ENCODE measurements at regions of chr1 and their contacts with region 1.

Region 1: GRCh38 chr1:40032240-40032891 is 8.2 kb upstream of the CAP1 start:
- DNase-seq: no peak
- H3K4me3 ChIP-seq: no peak overlapping the region
- H3K27ac ChIP-seq: no peak overlapping the region
- H3K27me3 ChIP-seq: no peaks in the 10 kb centered on the region
- CTCF ChIP-seq: peak; percentile 70

Region 2: DNA sequence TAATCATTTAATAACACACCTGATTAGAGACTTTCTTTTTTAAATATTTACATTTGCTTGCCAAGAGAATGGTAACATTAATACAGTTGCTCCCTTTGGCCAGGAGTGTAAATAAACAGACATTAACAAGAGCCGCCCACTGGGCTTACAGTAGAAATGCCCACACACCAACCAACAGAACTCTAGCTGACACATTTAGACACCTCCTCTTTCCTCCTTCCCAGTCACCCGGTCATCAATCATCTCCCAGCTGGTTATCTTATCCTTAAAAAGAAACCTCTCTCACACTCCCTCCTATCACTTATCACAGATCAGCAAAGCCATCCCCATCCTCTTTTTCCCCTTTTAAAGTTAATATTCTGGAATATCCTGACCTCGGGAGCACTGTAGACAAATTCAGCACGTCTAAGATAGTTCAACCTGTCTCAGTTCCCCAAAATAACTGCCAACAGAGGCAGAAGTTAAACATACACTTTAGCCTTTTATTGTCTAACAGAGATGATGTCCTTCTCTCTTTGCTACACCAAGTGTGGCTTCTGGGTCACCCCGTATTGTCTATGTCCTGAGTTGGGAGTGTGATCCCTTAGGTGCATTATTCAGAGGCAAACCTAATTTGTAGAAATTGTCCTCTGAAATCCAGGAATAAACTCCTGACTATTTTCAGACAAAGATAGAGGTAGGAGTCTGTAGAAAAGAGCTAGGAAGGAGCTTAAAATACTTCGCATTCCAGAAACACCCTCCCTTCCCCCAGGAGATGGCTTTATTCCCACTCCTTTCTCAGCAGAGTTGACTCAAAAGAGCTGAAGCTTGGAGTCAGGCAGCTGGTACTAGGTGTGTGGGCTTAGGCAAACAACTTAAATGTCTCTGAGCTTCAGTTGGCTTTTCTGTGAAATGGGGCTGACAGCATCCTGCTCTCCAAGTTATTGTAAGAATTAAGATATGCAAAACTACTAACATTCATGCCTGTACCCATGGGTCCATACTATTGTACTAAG is 139.5 kb before region 1 on chr1:
- CTCF ChIA-PET with region 1: interaction called, 15 read pairs
- POLR2A ChIA-PET with region 1: no interaction called
- DNase-seq: peak; percentile 48
- H3K4me3 ChIP-seq: no peak overlapping the region
- H3K27ac ChIP-seq: peak overlapping the region; percentile 13
- H3K27me3 ChIP-seq: no peaks in the 10 kb centered on the region
- CTCF ChIP-seq: no peak

Region 3: DNA sequence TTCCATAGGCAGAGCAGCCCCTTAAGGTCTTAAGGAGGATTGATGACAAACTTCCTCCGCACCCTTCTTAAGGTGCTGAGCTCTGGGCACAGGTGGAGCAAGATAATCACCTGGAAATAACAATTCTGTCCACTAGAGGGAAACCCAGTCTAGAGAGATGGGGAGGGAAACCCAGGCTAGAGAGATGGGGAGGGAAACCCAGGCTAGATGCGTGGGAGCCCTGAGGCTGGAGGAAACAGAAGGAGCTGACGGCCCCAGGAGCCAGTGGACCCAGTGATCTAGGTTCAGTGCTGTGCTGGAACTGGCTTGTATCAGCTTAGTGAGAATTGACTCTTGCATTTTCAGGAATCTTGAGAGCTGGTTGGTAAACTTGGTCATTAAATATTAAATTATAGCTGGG is 112.8 kb before region 1 on chr1:
- CTCF ChIA-PET with region 1: interaction called, 63 read pairs
- POLR2A ChIA-PET with region 1: no interaction called
- DNase-seq: peak; percentile 21
- H3K4me3 ChIP-seq: no peak overlapping the region
- H3K27ac ChIP-seq: no peak overlapping the region
- H3K27me3 ChIP-seq: peaks cover 12% of the 10 kb centered on the region
- CTCF ChIP-seq: peak; percentile 71

Region 4: DNA sequence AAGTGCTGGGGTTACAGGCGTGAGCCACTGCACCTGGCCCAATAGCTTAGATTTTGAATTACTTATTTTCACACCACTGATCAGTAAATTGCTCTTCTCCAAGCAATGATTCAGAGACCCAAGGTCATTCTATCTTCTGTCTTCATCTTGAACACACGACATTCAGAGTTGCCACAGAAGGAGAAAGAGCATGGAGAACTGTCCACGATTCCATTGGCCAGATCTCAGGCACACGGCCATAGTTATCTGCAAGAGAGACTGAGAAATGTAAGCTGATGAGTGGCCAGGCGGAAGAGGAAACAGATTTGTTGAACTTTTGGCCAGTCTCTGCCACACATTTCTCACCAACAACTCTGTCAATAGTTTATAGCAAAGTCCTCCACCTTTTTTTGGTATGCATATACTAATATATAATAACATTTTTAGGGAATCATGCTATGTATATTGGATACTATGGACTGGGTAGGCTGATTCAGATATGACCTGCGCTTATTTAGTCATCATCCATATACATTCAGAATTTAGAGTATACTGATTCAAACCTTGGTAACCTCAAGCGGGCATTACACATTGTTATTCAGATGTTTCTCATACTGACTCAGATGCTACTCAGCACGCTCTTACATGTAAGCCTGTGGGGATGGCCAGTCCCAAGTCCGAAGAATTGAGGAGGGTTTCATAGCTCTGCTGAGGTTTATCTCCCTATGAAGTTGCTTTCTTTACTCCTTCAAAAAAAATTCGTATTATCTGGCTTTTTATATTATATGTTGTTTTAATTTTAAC is 17.4 kb before region 1 on chr1:
- CTCF ChIA-PET with region 1: interaction called, 21 read pairs
- POLR2A ChIA-PET with region 1: interaction called, 4 read pairs
- DNase-seq: peak; percentile 76
- H3K4me3 ChIP-seq: 0 out of 2 replicates have a peak overlapping the region, but pooled peaks have one; percentile 10
- H3K27ac ChIP-seq: peak overlapping the region; percentile 86
- H3K27me3 ChIP-seq: no peaks in the 10 kb centered on the region
- CTCF ChIP-seq: no peak

Region 5: GRCh38 chr1:40059338-40059959 is 27.1 kb after region 1 on chr1:
- CTCF ChIA-PET with region 1: interaction called, 11 read pairs
- POLR2A ChIA-PET with region 1: no interaction called
- DNase-seq: no peak
- H3K4me3 ChIP-seq: no peak overlapping the region
- H3K27ac ChIP-seq: no peak overlapping the region
- H3K27me3 ChIP-seq: no peaks in the 10 kb centered on the region
- CTCF ChIP-seq: no peak

Measured in AG04450 (cell line).